GM23248 (cell line): ENCODE measurements at regions of chr12 and their contacts with region 1.

Region 1: DNA sequence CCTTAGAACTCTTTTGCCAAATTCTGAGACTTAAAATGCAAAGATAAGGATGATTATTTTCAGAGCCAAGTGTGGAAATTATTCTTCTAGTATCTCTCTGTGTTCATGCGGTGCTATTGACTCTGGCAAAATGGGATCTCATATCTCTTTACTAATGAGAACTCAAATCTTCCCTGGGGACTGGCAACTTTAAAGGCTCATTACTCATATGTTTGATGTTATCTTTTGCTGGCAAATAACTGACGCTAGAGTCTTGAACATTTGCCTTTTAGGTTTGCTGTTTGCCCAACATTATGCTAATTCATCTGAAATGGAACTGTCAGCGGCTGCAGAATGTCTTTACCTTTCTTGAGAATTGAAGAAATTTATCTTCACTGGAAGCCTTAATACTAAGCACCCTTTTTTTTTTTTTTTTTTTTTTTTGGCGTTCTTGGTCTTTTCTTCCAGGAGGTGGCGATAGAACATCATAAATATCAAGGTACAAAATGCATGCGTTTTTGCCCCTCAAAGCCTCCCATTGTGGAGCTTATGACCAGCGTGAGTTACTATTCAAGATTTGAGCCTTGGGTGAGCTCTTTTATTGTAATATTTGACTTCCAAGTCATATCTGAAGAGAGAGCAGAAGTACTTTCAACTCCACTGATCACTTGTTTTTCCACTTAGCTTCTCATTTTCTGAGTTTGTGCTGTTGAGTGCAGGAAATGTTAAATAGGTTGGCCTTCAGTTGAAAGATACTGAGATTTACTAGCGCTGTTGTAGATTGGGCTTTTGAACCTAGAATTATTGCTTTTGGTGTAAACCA is 86.6 kb downstream of the CAND1 start:
- DNase-seq: peak; percentile 81
- H3K4me3 ChIP-seq: no peak overlapping the region
- H3K27ac ChIP-seq: no peak overlapping the region
- H3K4me1 ChIP-seq: peaks cover 42% of the 10 kb centered on the region
- H3K27me3 ChIP-seq: no peaks in the 10 kb centered on the region

Region 2: DNA sequence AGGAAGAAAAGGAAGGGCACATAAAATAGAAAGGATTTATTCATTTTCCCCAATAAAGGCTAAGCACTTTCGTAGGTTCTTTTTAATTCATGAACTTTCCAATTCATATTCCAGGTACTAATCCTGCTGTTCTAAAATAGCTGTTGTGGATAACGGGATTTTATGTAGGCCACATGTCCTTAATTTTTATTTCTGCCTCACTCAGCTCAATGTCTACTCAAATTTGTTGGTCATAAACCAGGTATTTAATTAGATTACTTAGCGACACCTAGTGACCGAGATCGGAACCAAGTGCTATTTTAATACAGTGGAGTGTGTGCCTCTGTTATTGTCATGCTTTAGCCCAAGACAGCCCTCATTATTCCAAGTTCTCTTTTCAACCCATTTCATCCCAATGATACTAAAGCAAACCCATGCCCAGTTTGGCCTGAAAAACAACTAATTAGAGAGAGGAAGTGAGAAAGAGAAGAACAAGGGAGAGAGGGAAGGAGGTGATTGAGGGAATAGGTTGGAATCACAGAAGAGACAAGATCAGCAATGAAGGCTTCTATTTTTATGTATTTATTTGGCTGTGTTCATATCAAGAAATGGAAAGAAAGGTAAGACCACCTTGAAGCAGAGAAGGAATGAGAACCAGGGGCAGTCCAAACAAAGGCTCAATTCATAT is 587.6 kb after region 1 on chr12:
- in situ Hi-C with region 1: loop called (anchors 25 kb)
- DNase-seq: peak; percentile 81
- H3K4me3 ChIP-seq: no peak overlapping the region
- H3K27ac ChIP-seq: no peak overlapping the region
- H3K4me1 ChIP-seq: peaks cover 16% of the 10 kb centered on the region
- H3K27me3 ChIP-seq: no peaks in the 10 kb centered on the region

Region 3: GRCh38 chr12:68317047-68317667 is 961.4 kb after region 1 on chr12:
- in situ Hi-C with region 1: loop called (anchors 25 kb)
- DNase-seq: peak; percentile 72
- H3K4me3 ChIP-seq: no peak overlapping the region
- H3K27ac ChIP-seq: no peak overlapping the region
- H3K4me1 ChIP-seq: peaks cover 15% of the 10 kb centered on the region
- H3K27me3 ChIP-seq: no peaks in the 10 kb centered on the region